PC-9 (cell line): ENCODE measurements at regions of chr19 and their contacts with region 1.

Region 1: DNA sequence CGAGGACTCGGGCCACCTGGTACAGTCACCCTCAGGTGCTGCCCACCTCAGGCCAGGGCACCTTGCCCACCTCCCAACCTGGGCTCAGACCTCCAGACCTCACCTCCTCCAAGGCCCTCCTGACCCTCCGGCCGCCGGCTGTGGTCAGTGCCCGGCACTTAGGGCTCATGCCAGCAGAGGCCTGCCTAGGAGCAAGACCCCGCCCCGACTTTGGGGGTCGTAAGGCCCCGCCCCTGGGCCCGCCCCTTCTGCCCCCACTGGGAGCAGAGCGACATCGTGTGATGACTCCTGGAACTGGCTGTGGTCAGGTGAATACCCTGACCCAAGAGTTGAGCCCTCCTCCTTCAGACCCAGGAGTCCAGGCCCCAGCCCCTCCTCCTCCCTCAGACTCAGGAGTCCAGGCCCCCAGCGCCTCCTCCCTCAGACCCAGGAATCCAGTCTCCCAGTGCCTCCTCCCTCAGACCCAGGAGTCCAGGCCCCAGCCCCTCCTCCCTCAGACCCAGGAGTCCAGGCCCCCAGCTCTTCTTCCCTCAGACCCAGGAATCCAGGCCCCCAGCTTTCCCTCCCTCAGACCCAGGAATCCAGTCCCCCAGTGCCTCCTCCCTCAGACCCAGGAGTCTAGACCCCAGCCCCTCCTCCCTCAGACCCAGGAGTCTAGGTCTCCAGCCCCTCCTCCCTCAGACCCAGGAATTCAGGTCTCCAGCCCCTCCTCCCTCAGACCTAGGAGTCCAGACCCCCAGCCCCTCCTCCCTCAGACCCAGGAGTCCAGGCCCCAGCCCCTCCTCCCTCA is at the start of gene SBK2:
- DNase-seq: peak in 1 of 2 experiments; percentile 31
- H3K4me3 ChIP-seq: no peak within 1 kb of the TSS
- H3K27ac ChIP-seq: no peak within 1 kb of the TSS
- H3K4me1 ChIP-seq: peaks cover 19% of the 10 kb centered on the region
- H3K27me3 ChIP-seq: no peaks in the 10 kb centered on the region
- CTCF ChIP-seq: no peak
- total RNA-seq, gene SBK2: 3.5 and 3.9 TPM in 2 replicates

Region 2: DNA sequence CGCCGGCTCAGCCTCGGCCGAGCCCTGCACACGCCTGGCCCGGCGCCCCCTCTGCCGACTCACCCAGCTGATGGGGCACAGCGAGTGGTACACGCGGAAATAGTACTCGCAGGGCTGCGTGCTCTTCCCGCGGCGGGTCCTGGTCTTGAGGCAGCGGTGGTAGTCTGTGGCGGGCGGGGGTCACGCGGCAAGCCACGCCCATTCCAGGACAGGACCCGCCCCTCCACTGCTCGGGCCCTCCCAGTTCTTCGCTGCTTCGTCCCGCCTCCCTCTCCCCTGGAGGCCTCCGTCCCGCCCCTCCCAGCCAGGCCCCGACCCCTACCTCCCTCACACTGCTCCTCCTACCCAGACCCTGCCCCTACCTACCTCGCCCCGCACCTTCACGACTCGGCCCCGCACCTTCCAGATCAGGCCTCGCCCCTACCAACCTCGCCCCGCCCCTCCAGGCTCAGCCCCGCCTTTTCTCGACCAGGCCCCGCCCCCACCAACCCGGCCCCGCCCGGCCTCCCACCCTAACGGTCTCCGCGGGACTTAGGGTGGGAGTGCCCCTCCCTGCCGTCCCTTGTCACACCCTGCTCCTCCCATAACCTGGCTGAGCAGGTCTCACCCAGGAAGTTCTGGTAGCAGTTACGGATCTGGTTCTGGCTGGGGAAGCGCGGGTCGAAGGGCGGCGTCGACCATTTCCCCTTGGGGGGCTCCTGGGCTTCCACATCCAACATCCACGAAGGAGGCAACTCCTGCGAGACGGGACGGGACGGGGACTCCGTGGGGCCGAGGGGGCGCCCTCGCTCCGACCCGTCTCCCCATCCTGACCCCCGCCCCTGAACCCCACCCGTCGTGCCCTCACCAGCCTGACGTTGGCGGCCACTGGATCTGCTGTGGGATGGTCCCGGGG is 183.1 kb before region 1 on chr19:
- CTCF ChIA-PET with region 1: no interaction called
- POLR2A ChIA-PET with region 1: interaction called, 19 read pairs
- intact Hi-C with region 1: no loop called
- DNase-seq: peak; percentile 52 to 85
- H3K4me3 ChIP-seq: peak overlapping the region; percentile 72
- H3K27ac ChIP-seq: no peak overlapping the region
- H3K4me1 ChIP-seq: peaks cover 47% of the 10 kb centered on the region
- H3K27me3 ChIP-seq: peaks cover 5% of the 10 kb centered on the region
- CTCF ChIP-seq: no peak

Region 3: DNA sequence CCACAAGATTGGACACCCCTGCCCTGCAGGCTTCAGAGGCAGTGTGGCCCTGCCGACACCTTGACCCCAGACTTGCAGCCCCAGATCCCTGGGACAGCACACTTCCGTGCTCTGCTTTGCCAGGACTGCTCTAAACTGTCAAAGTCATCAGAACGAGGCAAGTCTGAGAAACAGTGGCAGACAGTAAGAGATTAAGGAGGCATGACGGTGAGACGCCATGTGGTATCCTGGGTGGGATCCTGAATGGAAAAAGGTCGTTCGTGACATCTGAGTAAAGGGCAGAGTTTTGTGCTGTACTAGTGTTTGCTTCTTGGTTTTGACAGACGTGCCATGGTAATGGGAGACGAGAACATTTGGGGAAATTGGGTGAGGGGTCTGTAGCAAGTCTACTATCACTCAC is 29.7 kb after region 1 on chr19:
- CTCF ChIA-PET with region 1: no interaction called
- POLR2A ChIA-PET with region 1: interaction called, 12 read pairs
- intact Hi-C with region 1: no loop called
- DNase-seq: no peak
- H3K4me3 ChIP-seq: no peak overlapping the region
- H3K27ac ChIP-seq: no peak overlapping the region
- H3K4me1 ChIP-seq: no peaks in the 10 kb centered on the region
- H3K27me3 ChIP-seq: no peaks in the 10 kb centered on the region
- CTCF ChIP-seq: no peak